ENCODE measurements at regions of chr20 and their contacts with region 1.

Region 1: GRCh38 chr20:2206957-2207769 is 88.6 kb upstream of the TGM3 start:
- DNase-seq: peak; percentile 67 to 93 (median 80)
- ATAC-seq: peak; percentile 96 to 98 (median 98)
- H3K4me3 ChIP-seq: peak overlapping the region; percentile 35 to 78 (median 66)
- H3K27ac ChIP-seq: no peak overlapping the region
- H3K4me1 ChIP-seq: peaks cover 0 to 3% (median 0%) of the 10 kb centered on the region in 3 donors
- H3K27me3 ChIP-seq: no peaks in the 10 kb centered on the region
- CTCF ChIP-seq: peak; percentile 56 to 79 (median 74)

Region 2: GRCh38 chr20:2451939-2452732 is 245.0 kb after region 1 on chr20:
- intact Hi-C with region 1: loop called in 2 of 3 experiments (anchors 5 to 10 kb)
- DNase-seq: peak in 5 of 6 donors; percentile 59 to 83 (median 75)
- ATAC-seq: peak; percentile 63 to 95 (median 91)
- H3K4me3 ChIP-seq: no peak overlapping the region
- H3K27ac ChIP-seq: no peak overlapping the region
- H3K4me1 ChIP-seq: no peaks in the 10 kb centered on the region
- H3K27me3 ChIP-seq: no peaks in the 10 kb centered on the region
- CTCF ChIP-seq: peak; percentile 56 to 80 (median 78)

Measured in pancreas (tissue), 10 donors.